ENCODE measurements at regions of chr20 and their contacts with region 1.

Region 1: DNA sequence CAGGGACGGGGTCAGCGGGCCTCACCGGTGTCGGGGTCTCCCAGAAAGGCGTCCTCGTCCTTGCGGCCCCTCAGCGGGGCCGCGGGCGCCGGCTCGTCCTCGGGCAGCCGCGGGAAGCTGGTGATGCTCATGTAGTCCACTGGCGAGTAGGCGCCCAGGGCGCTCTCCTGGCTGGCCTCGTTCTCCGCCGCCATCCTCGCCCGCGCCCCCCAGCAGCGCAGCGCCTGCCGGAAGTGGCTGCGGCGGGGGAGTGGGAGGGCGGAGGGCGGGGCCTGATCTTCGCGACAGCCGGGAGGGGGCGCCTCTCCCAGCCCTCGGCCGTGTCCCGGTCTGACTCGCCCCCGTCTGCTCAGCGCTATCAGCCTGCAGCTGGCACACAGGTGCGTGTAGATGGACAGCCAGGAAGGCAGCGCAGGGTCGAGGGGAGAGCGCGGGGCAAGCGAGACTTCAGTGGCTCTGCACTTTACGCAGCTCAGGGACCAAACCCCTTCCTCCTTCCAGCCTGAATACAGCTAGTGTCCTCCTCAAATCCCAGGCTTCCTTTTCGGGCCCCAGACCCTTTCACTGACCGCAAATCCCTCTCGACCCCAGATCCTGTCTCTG is at the start of gene GGT7:
- DNase-seq: peak; percentile 85
- H3K4me3 ChIP-seq: peak within 1 kb of the TSS; percentile 89
- H3K27ac ChIP-seq: peak within 1 kb of the TSS; percentile 84
- H3K4me1 ChIP-seq: peaks cover 69% of the 10 kb centered on the region
- H3K27me3 ChIP-seq: no peaks in the 10 kb centered on the region
- CTCF ChIP-seq: peak; percentile 77
- total RNA-seq, gene GGT7: 21.6 TPM

Region 2: DNA sequence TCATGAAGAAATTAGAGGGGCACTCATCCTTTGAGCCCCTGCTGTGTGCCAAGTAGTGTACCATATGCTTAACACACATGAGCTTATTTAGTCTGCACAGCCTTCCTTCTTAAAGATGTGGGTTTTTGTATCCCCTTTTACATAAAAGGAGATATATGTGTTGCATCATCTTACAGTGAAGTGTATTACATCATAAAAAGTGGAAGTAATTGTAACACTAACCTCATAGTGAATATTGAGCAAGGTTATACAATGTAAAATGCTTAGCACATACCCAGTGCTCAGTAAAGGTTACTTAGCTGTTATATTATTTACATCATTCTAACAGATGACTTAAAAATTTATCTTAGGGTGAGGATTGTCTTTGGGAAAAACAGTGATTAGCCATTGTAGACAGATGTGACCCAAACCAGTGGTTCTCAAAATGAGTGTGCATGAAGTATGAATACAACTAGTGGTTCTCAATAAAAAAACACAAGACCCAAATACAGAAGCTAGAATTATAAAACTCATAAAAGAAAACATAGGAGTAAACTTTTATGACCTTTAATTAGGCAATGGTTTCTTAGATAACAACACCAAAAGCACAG is 192.0 kb before region 1 on chr20:
- intact Hi-C with region 1: no loop called
- DNase-seq: no peak
- H3K4me3 ChIP-seq: no peak overlapping the region
- H3K27ac ChIP-seq: no peak overlapping the region
- H3K4me1 ChIP-seq: peaks cover 19% of the 10 kb centered on the region
- H3K27me3 ChIP-seq: no peaks in the 10 kb centered on the region
- CTCF ChIP-seq: no peak

Region 3: GRCh38 chr20:34753706-34754461 is 118.8 kb before region 1 on chr20:
- intact Hi-C with region 1: no loop called
- DNase-seq: no peak
- H3K4me3 ChIP-seq: no peak overlapping the region
- H3K27ac ChIP-seq: no peak overlapping the region
- H3K4me1 ChIP-seq: no peaks in the 10 kb centered on the region
- H3K27me3 ChIP-seq: no peaks in the 10 kb centered on the region
- CTCF ChIP-seq: peak; percentile 38

Region 4: GRCh38 chr20:34964486-34964885 is 91.8 kb after region 1 on chr20:
- intact Hi-C with region 1: loop called (anchors 5 kb)
- DNase-seq: no peak
- H3K4me3 ChIP-seq: no peak overlapping the region
- H3K27ac ChIP-seq: no peak overlapping the region
- H3K4me1 ChIP-seq: peaks cover 20% of the 10 kb centered on the region
- H3K27me3 ChIP-seq: no peaks in the 10 kb centered on the region
- CTCF ChIP-seq: no peak

Measured in left ventricle myocardium inferior (tissue), 1 donor.